Ascending aorta (tissue), 2 donors: ENCODE measurements at regions of chr21 and their contacts with region 1.

Region 1: DNA sequence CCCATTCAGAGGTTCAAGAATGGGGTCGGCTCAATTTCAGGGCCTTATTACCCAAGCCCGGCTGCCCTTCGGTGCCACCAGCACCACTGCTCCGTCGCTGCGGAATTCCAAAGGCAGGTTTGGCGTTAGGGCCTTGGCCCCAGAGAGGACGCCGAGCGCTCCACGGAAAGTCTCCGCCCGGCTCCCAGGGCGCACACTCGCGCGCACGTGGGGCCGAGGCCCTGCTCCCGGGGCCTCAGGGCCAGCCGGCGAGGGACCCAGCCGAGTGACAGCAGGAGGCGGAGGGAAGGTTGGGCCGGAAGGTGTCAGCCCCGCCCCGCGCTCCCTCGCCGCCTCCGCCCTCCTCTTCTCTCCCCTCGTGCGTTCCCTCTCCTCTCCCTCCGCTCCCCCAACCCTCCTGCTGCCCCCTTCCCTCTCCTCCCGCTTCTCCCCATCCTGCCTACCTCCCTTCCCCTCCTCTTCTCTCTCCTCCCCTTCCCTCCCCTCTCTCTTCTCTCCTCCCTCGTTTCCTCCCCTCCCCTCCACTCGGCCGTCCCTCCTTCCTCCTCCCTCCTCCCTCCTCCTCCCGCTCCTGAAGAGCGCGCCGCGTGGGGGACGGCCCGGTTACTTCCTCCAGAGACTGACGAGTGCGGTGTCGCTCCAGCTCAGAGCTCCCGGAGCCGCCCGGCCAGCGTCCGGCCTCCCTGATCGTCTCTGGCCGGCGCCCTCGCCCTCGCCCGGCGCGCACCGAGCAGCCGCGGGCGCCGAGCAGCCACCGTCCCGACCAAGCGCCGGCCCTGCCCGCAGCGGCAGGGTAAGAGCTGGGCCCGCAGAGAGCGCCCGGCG is at the start of gene ETS2:
- DNase-seq: peak; percentile 65 to 94
- H3K4me3 ChIP-seq: peak within 1 kb of the TSS; percentile 91 to 100
- H3K27ac ChIP-seq: peak within 1 kb of the TSS; percentile 99
- H3K4me1 ChIP-seq: peaks cover 11 to 22% of the 10 kb centered on the region in 2 donors
- H3K27me3 ChIP-seq: no peaks in the 10 kb centered on the region
- CTCF ChIP-seq: no peak
- total RNA-seq, gene ETS2: 113 TPM

Region 2: GRCh38 chr21:38505654-38506515 is 299.7 kb before region 1 on chr21:
- intact Hi-C with region 1: loop called (anchors 5 kb)
- DNase-seq: no peak
- H3K4me3 ChIP-seq: peak overlapping the region; percentile 31 to 62
- H3K27ac ChIP-seq: peak overlapping the region; percentile 82 to 86
- H3K4me1 ChIP-seq: peaks cover 0 to 24% of the 10 kb centered on the region in 2 donors
- H3K27me3 ChIP-seq: no peaks in the 10 kb centered on the region
- CTCF ChIP-seq: peak; percentile 54 to 75 (median 73)

Region 3: DNA sequence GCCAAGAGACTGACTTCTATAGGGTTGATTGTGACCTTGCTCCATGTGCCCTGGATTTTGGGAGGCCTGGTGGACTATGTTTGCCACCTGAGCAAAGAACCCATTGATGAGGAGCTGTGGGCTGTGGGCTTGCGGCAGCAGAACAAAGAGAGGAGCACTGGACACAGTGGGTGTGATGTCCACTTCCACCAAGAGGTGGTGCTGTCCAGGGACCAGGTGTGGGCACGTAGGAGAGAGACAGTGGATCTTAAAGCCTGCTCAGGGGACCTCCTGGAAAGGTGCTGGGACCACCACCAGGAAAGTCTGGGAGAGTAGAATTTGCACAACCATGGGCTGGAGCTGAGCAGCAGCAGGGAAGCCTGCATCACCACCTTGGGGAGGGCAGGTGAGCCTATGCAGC is 106.5 kb before region 1 on chr21:
- intact Hi-C with region 1: no loop called
- DNase-seq: no peak
- H3K4me3 ChIP-seq: no peak overlapping the region
- H3K27ac ChIP-seq: no peak overlapping the region
- H3K4me1 ChIP-seq: peaks cover 0 to 4% of the 10 kb centered on the region in 2 donors
- H3K27me3 ChIP-seq: no peaks in the 10 kb centered on the region
- CTCF ChIP-seq: peak in 1 of 3 experiments; percentile 5

Region 4: DNA sequence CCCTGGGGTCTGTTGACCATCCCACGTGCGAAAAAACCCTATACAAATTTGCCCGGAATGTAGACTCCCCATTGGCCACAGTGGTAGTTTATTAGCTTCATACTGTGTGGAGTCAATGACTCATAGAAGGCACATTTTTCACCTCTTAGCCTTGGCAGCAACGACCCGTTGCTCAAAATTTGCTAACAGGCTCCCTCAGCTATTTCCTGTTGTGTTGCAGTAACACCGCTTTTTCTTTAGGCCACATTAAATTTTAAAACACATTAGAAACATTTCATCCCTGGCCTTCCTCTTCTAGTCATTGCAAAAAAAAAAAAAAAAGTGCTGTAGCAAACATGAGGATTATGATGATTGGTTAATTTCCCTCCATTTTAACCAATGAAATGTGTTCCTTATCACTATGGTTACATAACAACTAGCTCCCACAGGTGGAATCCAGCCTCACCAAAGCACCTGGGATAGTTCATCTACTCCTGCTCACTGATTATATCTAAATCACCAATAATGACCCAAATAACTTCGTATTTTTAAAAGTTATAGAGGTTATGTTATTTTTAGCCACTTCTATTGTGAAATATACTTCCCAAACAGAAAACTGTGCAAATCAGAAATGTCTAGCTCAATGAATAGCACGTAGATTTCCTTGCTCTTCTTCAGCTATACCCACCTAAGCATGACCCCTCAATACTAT is 49.7 kb before region 1 on chr21:
- intact Hi-C with region 1: loop called (anchors 1 kb)
- DNase-seq: peak; percentile 40 to 93
- H3K4me3 ChIP-seq: no peak overlapping the region
- H3K27ac ChIP-seq: peak overlapping the region; percentile 77 to 92
- H3K4me1 ChIP-seq: peaks cover 38 to 84% of the 10 kb centered on the region in 2 donors
- H3K27me3 ChIP-seq: no peaks in the 10 kb centered on the region
- CTCF ChIP-seq: no peak

Region 5: DNA sequence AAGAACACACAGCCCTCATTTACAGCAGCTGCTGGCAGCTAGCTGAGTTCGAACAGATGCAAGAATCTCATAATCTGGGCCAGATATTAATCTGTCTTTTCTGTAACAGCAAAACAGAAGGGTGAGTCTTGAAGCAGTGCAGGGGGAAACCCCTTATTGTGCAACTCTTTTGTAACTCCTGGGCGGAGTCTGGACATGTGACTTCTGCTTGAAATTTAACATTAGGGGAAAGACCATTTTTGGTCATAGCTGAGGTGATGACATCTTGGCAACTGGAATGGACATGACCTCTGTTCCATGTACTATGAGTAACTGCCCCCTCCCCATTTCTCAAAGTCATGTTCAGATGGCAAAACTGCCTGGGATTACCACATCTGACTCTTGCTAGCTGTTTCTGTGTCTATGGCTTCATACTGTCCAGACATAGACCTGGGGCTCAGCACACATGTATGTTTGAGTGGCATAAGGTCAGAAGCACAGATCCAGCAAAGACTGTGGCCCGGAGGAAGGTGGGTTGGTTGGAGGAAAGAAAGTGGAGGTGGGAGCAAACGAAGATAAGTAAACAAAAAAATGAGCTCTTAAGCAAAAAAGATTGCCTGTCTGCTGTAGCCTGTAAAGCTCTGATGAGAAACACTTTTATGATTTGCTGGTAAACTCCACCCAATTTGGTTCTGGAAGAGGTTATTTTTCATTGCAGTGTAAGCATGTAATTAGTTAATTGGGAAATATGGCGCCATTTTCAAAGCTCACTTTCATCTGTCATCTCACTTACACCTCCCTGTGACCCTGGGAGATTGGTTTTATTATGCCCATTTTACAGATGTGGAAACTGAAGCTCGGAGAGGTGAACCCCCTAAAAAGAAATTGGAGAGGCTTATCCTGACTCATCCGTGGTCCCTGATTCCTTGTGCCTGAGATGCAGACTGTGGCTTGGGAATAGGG is 26.3 kb after region 1 on chr21:
- intact Hi-C with region 1: no loop called
- DNase-seq: peak; percentile 63 to 95
- H3K4me3 ChIP-seq: no peak overlapping the region
- H3K27ac ChIP-seq: peak overlapping the region; percentile 38 to 45
- H3K4me1 ChIP-seq: peaks cover 0 to 5% of the 10 kb centered on the region in 2 donors
- H3K27me3 ChIP-seq: no peaks in the 10 kb centered on the region
- CTCF ChIP-seq: no peak

Region 6: DNA sequence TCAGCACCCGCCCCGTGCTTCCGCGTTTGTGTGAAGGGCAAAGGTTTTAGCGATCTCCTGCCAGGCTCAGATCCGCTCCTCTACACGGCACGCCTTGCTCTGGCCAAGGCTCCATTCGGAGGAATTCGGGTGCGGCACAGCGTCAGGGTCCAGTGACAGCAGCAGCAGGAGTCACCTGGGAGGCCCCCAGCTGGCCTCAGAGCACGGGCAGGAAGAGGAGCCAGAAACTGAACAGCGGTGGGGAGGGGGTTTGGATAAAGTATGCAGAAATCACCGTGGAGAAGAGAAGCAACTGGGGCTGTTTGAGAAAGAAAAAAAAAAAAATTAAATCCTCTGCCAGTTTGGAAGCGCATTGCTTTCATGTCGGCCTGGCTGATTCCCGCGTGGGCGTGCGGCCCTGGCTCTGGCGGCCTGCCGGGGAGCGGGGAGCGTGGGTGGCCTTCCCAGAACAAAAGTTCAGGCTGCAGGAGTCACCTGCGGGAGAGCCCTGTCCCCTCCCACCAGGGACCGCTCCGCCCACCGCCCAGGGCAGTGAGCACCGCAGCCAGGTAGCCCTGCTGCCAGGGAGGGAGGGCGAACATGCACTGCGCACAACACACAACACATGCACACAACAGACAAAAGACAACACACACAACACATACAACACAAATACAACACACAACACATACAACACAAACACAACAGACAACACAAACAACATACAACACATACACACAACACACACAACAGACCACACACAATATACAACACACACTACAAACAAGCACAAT is 107.8 kb after region 1 on chr21:
- intact Hi-C with region 1: loop called (anchors 5 kb)
- DNase-seq: peak in 1 of 2 donors; percentile 88
- H3K4me3 ChIP-seq: peak overlapping the region; percentile 16 to 45
- H3K27ac ChIP-seq: peak overlapping the region; percentile 79 to 90
- H3K4me1 ChIP-seq: peaks cover 3 to 19% of the 10 kb centered on the region in 2 donors
- H3K27me3 ChIP-seq: no peaks in the 10 kb centered on the region
- CTCF ChIP-seq: no peak

Region 7: GRCh38 chr21:39022863-39023693 is 217.5 kb after region 1 on chr21:
- intact Hi-C with region 1: loop called (anchors 5 kb)
- DNase-seq: peak in 1 of 2 donors; percentile 87
- H3K4me3 ChIP-seq: peak overlapping the region in 1 of 2 donors; percentile 6
- H3K27ac ChIP-seq: peak overlapping the region; percentile 79 to 84
- H3K4me1 ChIP-seq: peaks cover 17 to 33% of the 10 kb centered on the region in 2 donors
- H3K27me3 ChIP-seq: no peaks in the 10 kb centered on the region
- CTCF ChIP-seq: peak in 2 of 3 experiments; percentile 16 to 45

Region 8: DNA sequence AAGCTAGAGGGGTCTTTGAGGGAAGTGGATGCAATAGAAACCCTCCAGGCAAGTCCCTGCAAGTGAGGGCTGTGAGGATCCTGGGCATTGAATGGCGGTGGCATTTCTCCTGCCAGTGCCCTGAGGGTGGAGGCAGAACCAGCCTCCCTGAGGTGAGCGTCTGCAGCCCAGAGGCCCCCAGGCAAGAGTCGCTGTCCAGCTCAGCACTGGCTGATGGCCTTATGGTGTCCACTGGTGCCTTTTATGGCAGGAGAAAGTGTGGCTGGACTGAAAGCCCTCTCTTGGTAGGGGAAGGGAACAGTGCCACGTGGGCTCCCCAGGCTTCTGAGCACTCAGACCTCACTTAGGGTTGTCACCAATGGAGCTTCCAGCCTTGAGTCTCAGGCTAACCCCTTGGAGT is 723.5 kb after region 1 on chr21:
- intact Hi-C with region 1: no loop called
- DNase-seq: no peak
- H3K4me3 ChIP-seq: no peak overlapping the region
- H3K27ac ChIP-seq: no peak overlapping the region
- H3K4me1 ChIP-seq: no peaks in the 10 kb centered on the region
- H3K27me3 ChIP-seq: no peaks in the 10 kb centered on the region
- CTCF ChIP-seq: no peak